Dendritic cell treated with granulocyte-macrophage colony-stimulating factor and Interleukin-4, amounts not matched to agents 40 ng/mL and 50 ng/mL, for 4 days (primary cell): ENCODE measurements at regions of chr4 and their contacts with region 1.

Region 1: DNA sequence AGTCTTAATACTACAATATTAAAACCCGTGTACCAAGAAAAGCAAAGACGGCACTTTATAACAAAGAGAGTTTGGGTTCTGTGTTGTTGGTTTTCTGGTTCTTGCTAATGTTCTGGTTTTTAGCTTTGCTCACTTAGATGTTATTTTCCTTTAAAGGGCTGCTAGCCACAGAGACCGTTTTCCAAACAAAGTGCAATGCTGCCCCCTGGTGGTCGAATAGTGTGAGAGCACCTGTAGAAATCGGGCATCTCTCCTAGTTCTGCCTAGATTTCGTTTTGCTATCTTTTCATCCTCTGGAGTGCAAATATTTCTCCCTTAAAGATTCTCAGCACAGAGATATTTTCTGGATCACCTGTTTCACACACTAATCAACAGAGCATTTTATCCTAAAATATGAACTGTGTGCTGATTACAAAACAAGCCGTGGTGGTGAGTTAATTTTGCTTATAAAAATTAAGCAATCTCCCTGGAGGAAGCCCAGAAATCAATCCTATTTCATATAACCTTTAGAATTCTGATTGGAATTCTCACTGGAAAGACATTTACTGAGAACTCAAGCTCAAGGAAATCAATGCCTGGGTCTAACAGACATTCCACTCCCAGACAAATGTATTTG is 334.5 kb upstream of the NOCT start:
- H3K4me3 Mint-ChIP-seq: no peak overlapping the region
- H3K27ac Mint-ChIP-seq: no peak overlapping the region
- H3K4me1 Mint-ChIP-seq: peaks cover 7% of the 10 kb centered on the region
- H3K27me3 Mint-ChIP-seq: peaks cover 21% of the 10 kb centered on the region

Region 2: GRCh38 chr4:138035781-138036258 is 645.3 kb before region 1 on chr4:
- intact Hi-C with region 1: loop called (anchors 1 kb)
- H3K4me3 Mint-ChIP-seq: no peak overlapping the region
- H3K27ac Mint-ChIP-seq: no peak overlapping the region
- H3K4me1 Mint-ChIP-seq: peaks cover 5% of the 10 kb centered on the region
- H3K27me3 Mint-ChIP-seq: no peaks in the 10 kb centered on the region

Region 3: DNA sequence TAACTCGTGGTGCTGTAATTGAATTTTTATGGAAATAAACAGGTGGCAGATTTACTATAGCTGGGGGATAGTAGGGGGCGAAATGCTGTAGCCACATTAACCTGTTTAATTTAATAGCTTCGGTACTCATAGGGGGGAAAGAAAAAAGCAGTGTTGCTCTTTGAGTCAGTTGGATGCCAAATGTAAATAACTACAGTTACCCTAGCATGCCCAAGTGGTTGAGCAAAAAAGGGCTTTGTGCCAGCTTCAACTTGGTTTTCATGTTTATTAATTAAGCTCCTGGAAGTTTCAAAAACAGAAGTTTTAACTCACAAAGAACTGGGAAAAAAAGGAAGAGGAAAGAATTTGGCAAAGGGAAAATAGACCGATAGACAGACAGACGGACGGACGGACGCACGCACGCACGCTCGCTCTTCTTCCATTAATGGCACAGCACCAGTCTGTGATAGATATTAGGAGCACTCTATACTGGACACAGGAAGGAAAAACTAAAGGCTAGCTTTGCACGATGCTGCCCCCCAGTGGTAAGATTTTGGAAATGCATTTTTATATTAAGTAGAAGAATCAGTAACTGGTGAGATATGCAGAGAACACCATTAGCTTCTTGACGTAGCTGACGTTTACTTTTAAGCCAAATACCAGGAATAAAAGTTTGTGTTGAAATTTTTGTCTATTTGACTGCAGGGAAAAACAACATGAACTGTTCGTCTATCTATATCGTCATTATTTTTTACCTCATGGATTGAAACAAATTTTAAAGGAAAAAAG is 590.8 kb before region 1 on chr4:
- intact Hi-C with region 1: loop called (anchors 5 kb)
- H3K4me3 Mint-ChIP-seq: no peak overlapping the region
- H3K27ac Mint-ChIP-seq: no peak overlapping the region
- H3K4me1 Mint-ChIP-seq: peaks cover 5% of the 10 kb centered on the region
- H3K27me3 Mint-ChIP-seq: peaks cover 7% of the 10 kb centered on the region

Region 4: DNA sequence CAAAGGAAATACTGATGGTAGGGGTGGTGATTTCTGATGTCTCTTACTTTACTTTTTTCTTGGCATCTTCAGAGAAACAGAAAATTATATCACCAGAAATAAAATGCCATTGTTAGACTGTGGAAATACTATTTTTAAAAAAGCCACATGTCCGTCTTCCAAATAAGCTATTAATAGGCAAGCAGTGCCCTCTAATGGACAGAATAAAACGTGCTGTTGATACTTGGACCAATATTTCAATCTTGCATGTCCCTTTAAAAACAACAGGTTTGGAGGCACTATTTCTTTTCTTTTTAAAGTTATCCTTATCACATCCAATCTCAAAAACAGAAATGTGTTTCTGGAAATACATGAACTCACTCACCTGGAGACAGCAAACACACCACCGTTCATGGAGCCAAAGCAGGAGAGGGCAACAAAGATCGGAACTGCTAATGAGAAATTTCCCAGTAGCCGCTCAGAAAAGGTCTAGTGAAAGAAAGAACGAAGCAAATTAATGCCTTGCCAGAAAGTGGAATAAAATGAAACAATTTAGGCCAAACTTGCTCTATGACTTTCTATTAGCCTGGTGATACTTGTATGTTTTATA is 498.2 kb before region 1 on chr4:
- intact Hi-C with region 1: loop called (anchors 5 kb)
- H3K4me3 Mint-ChIP-seq: no peak overlapping the region
- H3K27ac Mint-ChIP-seq: peak overlapping the region; percentile 33
- H3K4me1 Mint-ChIP-seq: peaks cover 26% of the 10 kb centered on the region
- H3K27me3 Mint-ChIP-seq: no peaks in the 10 kb centered on the region

Region 5: DNA sequence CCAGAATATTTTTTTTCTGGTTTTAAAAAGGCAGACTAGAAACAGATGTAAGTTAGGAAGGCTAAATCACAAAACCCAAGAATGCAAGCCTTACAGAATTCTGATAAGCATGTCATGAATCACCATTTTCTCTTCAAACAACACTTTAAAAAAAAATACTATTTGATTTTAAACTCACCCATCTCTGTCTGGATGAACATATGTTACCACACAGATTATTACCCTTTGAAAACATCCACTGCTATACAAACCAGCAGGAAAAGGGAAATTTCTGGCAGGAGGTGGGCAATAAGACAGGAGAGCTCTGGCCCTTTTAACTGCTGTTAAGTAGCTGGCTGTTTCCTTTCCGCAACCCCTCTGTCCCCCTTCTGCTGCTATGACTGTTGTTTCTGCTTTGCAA is 16.8 kb after region 1 on chr4:
- intact Hi-C with region 1: no loop called
- H3K4me3 Mint-ChIP-seq: no peak overlapping the region
- H3K27ac Mint-ChIP-seq: no peak overlapping the region
- H3K4me1 Mint-ChIP-seq: peaks cover 23% of the 10 kb centered on the region
- H3K27me3 Mint-ChIP-seq: peaks cover 10% of the 10 kb centered on the region

Region 6: GRCh38 chr4:138870737-138871554 is 189.8 kb after region 1 on chr4:
- intact Hi-C with region 1: loop called (anchors 5 kb)
- H3K4me3 Mint-ChIP-seq: no peak overlapping the region
- H3K27ac Mint-ChIP-seq: no peak overlapping the region
- H3K4me1 Mint-ChIP-seq: no peaks in the 10 kb centered on the region
- H3K27me3 Mint-ChIP-seq: peaks cover 16% of the 10 kb centered on the region

Region 7: DNA sequence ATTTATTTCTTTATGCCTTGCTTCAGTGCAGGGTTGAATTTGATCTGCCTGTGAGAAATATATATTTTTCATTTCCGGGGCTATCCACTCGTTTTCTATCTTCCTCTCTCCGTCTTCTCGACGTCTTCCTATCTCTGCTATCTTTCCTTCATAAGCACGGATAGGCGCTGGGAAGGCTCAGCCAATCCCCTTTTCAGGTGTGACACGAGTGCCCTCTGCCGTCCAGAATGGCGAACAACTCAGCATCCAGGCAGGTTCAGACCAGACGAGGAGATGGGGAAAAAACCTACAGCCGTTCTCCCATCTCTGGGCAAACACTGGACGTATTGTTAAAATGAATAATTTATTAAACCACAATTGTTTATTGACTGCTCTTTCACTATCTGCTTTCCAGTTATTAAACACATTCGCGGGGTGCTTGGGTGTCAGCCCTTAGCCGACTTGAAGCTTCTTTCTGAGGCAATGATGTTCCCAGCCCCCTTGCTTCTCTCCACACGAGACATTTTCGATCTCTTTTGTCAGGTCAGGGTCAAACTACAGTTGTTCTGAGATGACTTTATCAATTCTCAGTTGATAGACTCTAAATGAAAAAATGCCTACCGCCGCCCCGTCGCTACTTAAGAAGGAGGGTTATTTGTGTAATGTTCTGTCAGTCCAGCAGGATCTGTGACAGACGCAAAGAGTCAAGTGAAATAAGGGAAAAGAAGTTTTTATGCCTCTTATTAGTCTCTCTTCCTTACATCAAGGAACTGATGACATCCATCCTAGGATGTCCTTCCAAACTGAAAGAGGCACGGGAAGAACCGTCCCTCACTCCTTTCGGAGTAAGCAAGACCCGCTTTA is 238.2 kb after region 1 on chr4:
- intact Hi-C with region 1: loop called (anchors 2 kb)
- H3K4me3 Mint-ChIP-seq: no peak overlapping the region
- H3K27ac Mint-ChIP-seq: no peak overlapping the region
- H3K4me1 Mint-ChIP-seq: peaks cover 21% of the 10 kb centered on the region
- H3K27me3 Mint-ChIP-seq: peaks cover 5% of the 10 kb centered on the region